Gastrocnemius medialis (tissue), 4 donors: ENCODE measurements at regions of chr7 and their contacts with region 1.

Region 1: DNA sequence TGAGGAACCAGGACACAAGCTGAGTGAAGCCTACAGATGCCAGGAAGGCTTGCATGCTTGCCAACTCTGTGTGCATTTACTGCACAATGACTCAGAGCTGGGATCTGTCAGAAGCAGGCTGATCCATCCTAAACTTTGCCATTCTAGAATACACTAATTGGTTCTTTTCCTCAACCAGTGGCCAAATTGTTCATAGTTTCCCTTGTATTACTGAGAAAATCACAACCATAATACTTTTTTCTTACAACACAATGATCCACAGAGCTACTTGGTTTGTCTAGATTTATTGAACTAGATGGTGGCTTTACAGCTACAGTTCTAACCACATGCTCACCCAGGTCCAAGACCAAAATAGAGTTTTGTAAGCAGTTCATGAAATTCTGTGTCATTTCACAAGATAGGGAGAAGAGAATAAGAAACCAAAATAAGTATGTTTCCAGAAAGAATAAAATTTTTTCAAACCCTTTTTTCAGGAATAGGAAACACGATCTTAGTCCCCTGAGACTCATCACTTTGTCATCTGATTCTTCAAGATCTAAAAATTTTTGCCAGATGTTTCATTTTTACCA is 21.0 kb upstream of the LRRC17 start:
- DNase-seq: peak; percentile 9 to 27
- ATAC-seq: peak; percentile 53 to 79
- H3K4me3 ChIP-seq: no peak overlapping the region
- H3K27ac ChIP-seq: no peak overlapping the region
- H3K4me1 ChIP-seq: peaks cover 4 to 22% of the 10 kb centered on the region in 2 donors
- H3K27me3 ChIP-seq: no peaks in the 10 kb centered on the region
- CTCF ChIP-seq: no peak
- POLR2A ChIP-seq: no peak

Region 2: GRCh38 chr7:102834999-102835398 is 56.8 kb before region 1 on chr7:
- in situ Hi-C with region 1: no loop called
- intact Hi-C with region 1: loop called (anchors 5 kb)
- DNase-seq: no peak
- ATAC-seq: no peak
- H3K4me3 ChIP-seq: no peak overlapping the region
- H3K27ac ChIP-seq: no peak overlapping the region
- H3K4me1 ChIP-seq: peaks cover 13 to 17% of the 10 kb centered on the region in 2 donors
- H3K27me3 ChIP-seq: no peaks in the 10 kb centered on the region
- CTCF ChIP-seq: no peak
- POLR2A ChIP-seq: no peak